CD4-positive, alpha-beta memory T cell (primary cell): ENCODE measurements at regions of chr13 and their contacts with region 1.

Region 1: GRCh38 chr13:23848646-23849141 is 40.5 kb downstream of the MIPEP start:
- DNase-seq: no peak
- H3K4me3 ChIP-seq: no peak overlapping the region
- H3K4me3 Mint-ChIP-seq: no peak overlapping the region
- H3K27ac ChIP-seq: no peak overlapping the region
- H3K27ac Mint-ChIP-seq: no peak overlapping the region
- H3K4me1 ChIP-seq: no peaks in the 10 kb centered on the region
- H3K4me1 Mint-ChIP-seq: peaks cover 5 to 13% (median 7%) of the 10 kb centered on the region in 4 donors
- H3K27me3 ChIP-seq: no peaks in the 10 kb centered on the region
- H3K27me3 Mint-ChIP-seq: no peaks in the 10 kb centered on the region

Region 2: GRCh38 chr13:23516702-23517101 is 332.0 kb before region 1 on chr13:
- CTCF ChIA-PET with region 1: no interaction called
- POLR2A ChIA-PET with region 1: no interaction called
- intact Hi-C with region 1: loop called (anchors 5 kb)
- DNase-seq: no peak
- H3K4me3 ChIP-seq: no peak overlapping the region
- H3K4me3 Mint-ChIP-seq: no peak overlapping the region
- H3K27ac ChIP-seq: no peak overlapping the region
- H3K27ac Mint-ChIP-seq: no peak overlapping the region
- H3K4me1 ChIP-seq: no peaks in the 10 kb centered on the region
- H3K4me1 Mint-ChIP-seq: no peaks in the 10 kb centered on the region
- H3K27me3 ChIP-seq: no peaks in the 10 kb centered on the region
- H3K27me3 Mint-ChIP-seq: peaks cover 15 to 24% of the 10 kb centered on the region in 2 donors

Region 3: GRCh38 chr13:23866420-23867026 is 17.8 kb after region 1 on chr13:
- CTCF ChIA-PET with region 1: no interaction called
- POLR2A ChIA-PET with region 1: no interaction called
- intact Hi-C with region 1: no loop called
- DNase-seq: no peak
- H3K4me3 ChIP-seq: no peak overlapping the region
- H3K4me3 Mint-ChIP-seq: no peak overlapping the region
- H3K27ac ChIP-seq: no peak overlapping the region
- H3K27ac Mint-ChIP-seq: no peak overlapping the region
- H3K4me1 ChIP-seq: no peaks in the 10 kb centered on the region
- H3K4me1 Mint-ChIP-seq: peaks cover 0 to 3% (median under 1%) of the 10 kb centered on the region in 4 donors
- H3K27me3 ChIP-seq: no peaks in the 10 kb centered on the region
- H3K27me3 Mint-ChIP-seq: no peaks in the 10 kb centered on the region

Region 4: DNA sequence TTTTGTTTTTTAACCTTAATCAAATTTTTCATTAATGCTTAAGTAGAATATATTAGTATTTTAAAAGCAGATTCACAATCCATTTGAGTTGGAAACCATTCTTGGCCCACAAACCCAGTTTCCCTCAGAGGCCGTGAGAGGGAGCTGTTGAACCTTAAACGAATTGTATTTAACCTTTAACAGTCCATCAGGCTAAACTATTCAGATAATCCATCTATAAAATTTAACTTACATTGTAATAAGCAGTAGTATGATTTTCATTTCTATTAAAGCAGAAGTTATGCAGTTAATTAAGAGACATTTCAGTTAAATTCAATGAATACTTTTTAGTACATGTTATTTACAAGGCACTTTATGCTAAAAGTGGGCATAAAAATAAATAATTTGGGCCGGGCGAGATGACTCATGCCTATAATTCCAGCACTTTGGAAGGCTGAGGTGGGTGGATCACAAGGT is 171.7 kb after region 1 on chr13:
- CTCF ChIA-PET with region 1: no interaction called
- POLR2A ChIA-PET with region 1: no interaction called
- intact Hi-C with region 1: no loop called
- DNase-seq: peak in 3 of 5 donors; percentile 9 to 17 (median 13)
- H3K4me3 ChIP-seq: no peak overlapping the region
- H3K4me3 Mint-ChIP-seq: no peak overlapping the region
- H3K27ac ChIP-seq: no peak overlapping the region
- H3K27ac Mint-ChIP-seq: no peak overlapping the region
- H3K4me1 ChIP-seq: no peaks in the 10 kb centered on the region
- H3K4me1 Mint-ChIP-seq: no peaks in the 10 kb centered on the region
- H3K27me3 ChIP-seq: no peaks in the 10 kb centered on the region
- H3K27me3 Mint-ChIP-seq: peaks cover 1 to 2% of the 10 kb centered on the region in 2 donors